ENCODE measurements at regions of chr16 and their contacts with region 1.

Region 1: GRCh38 chr16:24036614-24037013 is 200.8 kb downstream of the PRKCB start:
- DNase-seq: peak in 1 of 2 experiments; percentile 70
- H3K4me3 ChIP-seq: no peak overlapping the region
- H3K27ac ChIP-seq: no peak overlapping the region
- H3K4me1 ChIP-seq: no peaks in the 10 kb centered on the region; a peak in 1 of 7 replicates
- H3K27me3 ChIP-seq: no peaks in the 10 kb centered on the region
- CTCF ChIP-seq: peak; percentile 62 to 89 (median 87)
- EP300 ChIP-seq: no peak
- POLR2A ChIP-seq: no peak
- RAD21 ChIP-seq: peak; percentile 98 to 99

Region 2: GRCh38 chr16:23734176-23734893 is 302.3 kb before region 1 on chr16:
- CTCF ChIA-PET with region 1: interaction called, 42 read pairs
- POLR2A ChIA-PET with region 1: no interaction called
- DNase-seq: no peak
- H3K4me3 ChIP-seq: no peak overlapping the region
- H3K27ac ChIP-seq: no peak overlapping the region
- H3K4me1 ChIP-seq: no peaks in the 10 kb centered on the region; a peak in 5 of 7 replicates
- H3K27me3 ChIP-seq: no peaks in the 10 kb centered on the region
- CTCF ChIP-seq: no peak
- EP300 ChIP-seq: no peak
- POLR2A ChIP-seq: no peak
- RAD21 ChIP-seq: no peak

Region 3: DNA sequence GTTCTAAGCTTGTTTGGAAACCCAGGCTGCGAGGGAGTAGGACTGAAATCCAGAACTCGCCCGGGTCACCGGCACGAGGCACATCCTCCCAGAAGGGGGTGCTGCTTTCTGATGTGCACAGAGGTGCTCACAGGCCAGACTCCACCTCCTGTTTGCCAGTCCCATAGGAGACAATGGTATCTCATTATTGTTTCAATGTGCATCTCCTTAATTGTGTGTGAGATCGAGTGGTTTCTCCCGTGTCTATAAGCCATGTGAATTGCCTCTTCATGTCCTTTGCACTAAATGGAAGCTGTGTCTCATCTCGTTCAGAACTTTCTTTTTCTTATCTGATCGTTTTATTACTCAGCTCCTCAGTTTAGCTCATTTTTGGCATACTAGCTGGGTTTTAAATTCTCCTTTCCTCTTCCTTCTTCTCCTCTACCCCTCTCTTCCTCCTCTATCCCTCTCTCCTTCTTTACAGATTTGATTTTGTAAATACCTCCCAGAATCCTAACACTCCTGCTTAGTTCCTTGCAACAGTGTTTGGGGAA is 233.0 kb before region 1 on chr16:
- CTCF ChIA-PET with region 1: interaction called, 17 read pairs
- POLR2A ChIA-PET with region 1: no interaction called
- DNase-seq: peak; percentile 31 to 78
- H3K4me3 ChIP-seq: no peak overlapping the region
- H3K27ac ChIP-seq: no peak overlapping the region
- H3K4me1 ChIP-seq: no peaks in the 10 kb centered on the region
- H3K27me3 ChIP-seq: no peaks in the 10 kb centered on the region
- CTCF ChIP-seq: peak; percentile 83 to 86 (median 84)
- EP300 ChIP-seq: no peak
- POLR2A ChIP-seq: no peak
- RAD21 ChIP-seq: peak; percentile 76 to 78

Region 4: DNA sequence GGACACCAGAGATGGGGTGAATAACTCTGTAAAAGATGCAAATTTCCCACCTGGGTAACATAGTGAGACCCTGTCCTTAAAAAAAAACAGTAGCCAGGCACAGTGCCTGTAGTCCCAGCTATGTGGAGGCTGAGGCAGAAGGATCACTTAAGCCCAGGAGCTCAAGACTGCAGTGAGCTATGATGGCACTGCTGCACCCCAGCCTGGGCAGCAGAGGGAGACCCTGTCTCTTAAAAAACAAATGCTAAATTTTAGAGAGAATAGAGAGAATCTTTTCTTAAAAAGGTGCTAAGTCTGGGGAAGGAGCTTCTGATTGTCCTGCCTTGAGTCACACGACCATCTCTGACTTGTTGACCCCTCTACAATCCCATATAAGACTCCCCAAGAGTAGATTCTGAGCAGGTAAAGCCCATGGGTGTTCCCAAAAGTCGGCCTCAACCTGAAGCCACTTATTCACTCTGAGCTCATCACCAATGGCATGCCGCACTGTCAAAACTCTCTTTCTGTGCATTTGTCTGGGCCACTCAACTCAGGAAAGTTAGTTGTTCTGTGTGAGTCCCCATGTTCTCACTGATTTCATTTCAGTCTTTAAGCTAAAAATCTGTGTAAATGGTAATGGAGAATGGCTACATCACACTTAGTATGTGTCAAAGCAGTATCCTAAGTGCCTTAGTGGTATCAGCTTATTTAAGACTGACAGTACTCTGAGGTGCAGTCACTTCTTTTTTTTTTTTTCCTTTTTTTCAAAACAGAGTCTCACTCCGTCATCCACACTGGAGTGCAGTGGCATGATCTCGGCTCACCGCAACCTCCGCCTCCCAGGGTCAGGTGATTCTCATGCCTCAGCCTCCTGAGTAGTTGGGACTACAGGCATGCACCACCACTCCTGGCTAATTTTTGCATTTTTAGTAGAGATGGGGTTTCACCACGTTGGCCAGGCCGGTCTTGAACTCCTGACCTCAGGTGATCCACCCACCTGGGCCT is 159.2 kb before region 1 on chr16:
- CTCF ChIA-PET with region 1: interaction called, 10 read pairs
- POLR2A ChIA-PET with region 1: no interaction called
- DNase-seq: no peak
- H3K4me3 ChIP-seq: no peak overlapping the region
- H3K27ac ChIP-seq: no peak overlapping the region
- H3K4me1 ChIP-seq: no peaks in the 10 kb centered on the region
- H3K27me3 ChIP-seq: no peaks in the 10 kb centered on the region
- CTCF ChIP-seq: peak; percentile 32 to 47 (median 33); a peak in 3 of 4 replicates
- EP300 ChIP-seq: no peak
- POLR2A ChIP-seq: no peak
- RAD21 ChIP-seq: peak; percentile 55 to 67

Region 5: DNA sequence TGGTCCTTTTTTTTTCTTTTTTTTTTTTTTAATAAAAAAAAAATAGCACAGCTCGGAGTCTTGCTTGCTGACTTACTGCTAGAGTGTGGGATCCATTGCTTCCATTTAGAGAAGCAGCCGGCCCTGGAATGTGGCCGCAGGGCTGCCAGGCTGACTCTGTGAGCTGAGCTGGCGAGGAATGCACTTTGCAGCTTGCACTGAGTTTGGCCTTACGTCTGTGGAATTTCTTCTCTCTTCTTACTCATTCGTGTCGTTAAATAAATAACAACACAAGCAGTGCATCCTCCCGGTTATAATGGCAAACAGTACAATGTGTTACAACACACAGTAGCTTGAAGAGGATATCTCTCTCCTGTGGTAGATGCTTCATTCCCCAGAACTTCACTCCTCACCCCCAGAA is 131.6 kb before region 1 on chr16:
- CTCF ChIA-PET with region 1: no interaction called
- POLR2A ChIA-PET with region 1: no interaction called
- DNase-seq: peak in 1 of 2 experiments; percentile 68
- H3K4me3 ChIP-seq: no peak overlapping the region
- H3K27ac ChIP-seq: 0 out of 2 replicates have a peak overlapping the region, but pooled peaks have one; percentile 22
- H3K4me1 ChIP-seq: peaks cover 5 to 19% (median 13%) of the 10 kb centered on the region in 4 experiments; a peak in 6 of 7 replicates
- H3K27me3 ChIP-seq: no peaks in the 10 kb centered on the region
- CTCF ChIP-seq: no peak
- EP300 ChIP-seq: no peak
- POLR2A ChIP-seq: no peak
- RAD21 ChIP-seq: no peak

Region 6: DNA sequence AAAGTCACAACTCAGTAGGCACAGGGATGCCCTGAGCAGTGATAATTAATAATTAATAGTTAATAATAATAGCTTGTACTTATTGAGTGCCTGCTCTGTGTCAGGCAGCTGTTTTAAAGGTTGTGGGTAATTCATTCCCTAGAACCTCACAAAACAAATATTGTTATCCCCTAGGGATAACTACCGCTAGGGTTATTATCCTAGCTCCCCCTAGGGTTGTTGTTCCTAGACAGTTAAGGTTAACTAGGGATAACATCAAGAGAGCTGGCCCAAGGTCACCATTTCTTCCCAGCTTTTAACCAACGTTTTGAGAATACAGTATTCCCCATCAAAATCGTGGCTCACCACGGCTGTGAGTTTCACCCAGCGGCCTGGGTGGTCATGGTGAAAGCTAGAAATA is 20.7 kb before region 1 on chr16:
- CTCF ChIA-PET with region 1: interaction called, 19 read pairs
- POLR2A ChIA-PET with region 1: no interaction called
- DNase-seq: no peak
- H3K4me3 ChIP-seq: no peak overlapping the region
- H3K27ac ChIP-seq: no peak overlapping the region
- H3K4me1 ChIP-seq: peaks cover 0 to 3% (median 0%) of the 10 kb centered on the region in 4 experiments; a peak in 1 of 7 replicates
- H3K27me3 ChIP-seq: no peaks in the 10 kb centered on the region
- CTCF ChIP-seq: no peak; a peak in 1 of 4 replicates
- EP300 ChIP-seq: no peak
- POLR2A ChIP-seq: no peak
- RAD21 ChIP-seq: no peak

Region 7: DNA sequence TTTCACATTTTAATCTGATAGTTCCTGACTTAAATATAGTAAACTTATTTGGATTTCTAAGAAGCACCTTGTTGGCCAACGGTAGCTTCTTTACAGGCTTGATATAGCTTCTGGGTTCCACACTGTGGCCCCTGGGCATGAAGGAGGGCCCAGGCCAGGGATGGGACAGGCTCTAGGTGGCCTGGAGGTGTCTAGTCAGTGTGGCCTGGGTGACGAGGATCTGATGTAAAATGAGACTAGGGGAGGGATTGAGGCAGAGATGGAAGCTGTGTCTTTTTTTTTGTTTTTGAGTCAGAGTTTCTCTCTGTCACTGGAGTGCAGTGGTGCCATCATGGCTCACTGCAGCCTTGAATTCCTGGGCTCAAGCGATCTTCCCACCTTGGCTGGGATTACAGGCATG is 13.8 kb before region 1 on chr16:
- CTCF ChIA-PET with region 1: interaction called, 45 read pairs
- POLR2A ChIA-PET with region 1: interaction called, 3 read pairs
- DNase-seq: no peak
- H3K4me3 ChIP-seq: no peak overlapping the region
- H3K27ac ChIP-seq: no peak overlapping the region
- H3K4me1 ChIP-seq: no peaks in the 10 kb centered on the region
- H3K27me3 ChIP-seq: no peaks in the 10 kb centered on the region
- CTCF ChIP-seq: no peak
- EP300 ChIP-seq: no peak
- POLR2A ChIP-seq: no peak
- RAD21 ChIP-seq: no peak

Region 8: GRCh38 chr16:24054741-24055491 is 18.3 kb after region 1 on chr16:
- CTCF ChIA-PET with region 1: no interaction called
- POLR2A ChIA-PET with region 1: no interaction called
- DNase-seq: peak in 1 of 2 experiments; percentile 56
- H3K4me3 ChIP-seq: peak overlapping the region in 1 of 4 experiments; percentile 16; a peak in 2 of 8 replicates
- H3K27ac ChIP-seq: peak overlapping the region; percentile 3; the same call in 1 of the 2 replicates
- H3K4me1 ChIP-seq: peaks cover 5 to 30% (median 12%) of the 10 kb centered on the region in 4 experiments
- H3K27me3 ChIP-seq: no peaks in the 10 kb centered on the region
- CTCF ChIP-seq: no peak
- EP300 ChIP-seq: no peak
- POLR2A ChIP-seq: no peak
- RAD21 ChIP-seq: peak in 1 of 2 experiments; percentile 9; a peak in 1 of 4 replicates

Region 9: GRCh38 chr16:24504472-24505345 is 468.1 kb after region 1 on chr16:
- CTCF ChIA-PET with region 1: interaction called, 139 read pairs
- POLR2A ChIA-PET with region 1: no interaction called
- DNase-seq: peak; percentile 38 to 72
- H3K4me3 ChIP-seq: no peak overlapping the region
- H3K27ac ChIP-seq: no peak overlapping the region
- H3K4me1 ChIP-seq: no peaks in the 10 kb centered on the region
- H3K27me3 ChIP-seq: no peaks in the 10 kb centered on the region; a peak in 1 of 7 replicates
- CTCF ChIP-seq: peak; percentile 58 to 92 (median 84)
- EP300 ChIP-seq: no peak
- POLR2A ChIP-seq: no peak
- RAD21 ChIP-seq: peak; percentile 95 to 98

Measured in H1 (cell line).